Calu3 (cell line): ENCODE measurements at regions of chr2 and their contacts with region 1.

Region 1: DNA sequence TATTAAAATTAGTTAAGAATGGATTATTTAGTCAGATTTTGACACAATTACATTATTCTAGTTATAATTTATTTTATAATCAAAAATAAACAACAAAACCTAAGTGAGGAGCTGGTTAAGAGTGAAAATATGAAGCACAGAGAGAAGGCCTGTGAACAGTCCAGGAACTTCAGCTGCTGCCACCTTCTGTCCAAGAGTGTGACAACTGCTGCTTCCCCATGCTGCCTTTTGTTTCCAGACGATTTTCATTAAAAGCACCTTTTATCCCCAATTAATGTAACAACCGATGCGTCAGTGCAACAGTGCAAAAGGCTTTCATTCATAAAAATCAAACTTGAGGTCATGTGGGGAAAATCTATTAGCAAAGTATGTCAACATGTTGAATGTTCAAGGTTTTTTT is 363.6 kb downstream of the CTNNA2 start:
- DNase-seq: no peak
- H3K4me3 Mint-ChIP-seq: no peak overlapping the region
- H3K27ac Mint-ChIP-seq: no peak overlapping the region
- H3K4me1 Mint-ChIP-seq: no peaks in the 10 kb centered on the region
- H3K27me3 Mint-ChIP-seq: no peaks in the 10 kb centered on the region
- CTCF ChIP-seq: no peak

Region 2: DNA sequence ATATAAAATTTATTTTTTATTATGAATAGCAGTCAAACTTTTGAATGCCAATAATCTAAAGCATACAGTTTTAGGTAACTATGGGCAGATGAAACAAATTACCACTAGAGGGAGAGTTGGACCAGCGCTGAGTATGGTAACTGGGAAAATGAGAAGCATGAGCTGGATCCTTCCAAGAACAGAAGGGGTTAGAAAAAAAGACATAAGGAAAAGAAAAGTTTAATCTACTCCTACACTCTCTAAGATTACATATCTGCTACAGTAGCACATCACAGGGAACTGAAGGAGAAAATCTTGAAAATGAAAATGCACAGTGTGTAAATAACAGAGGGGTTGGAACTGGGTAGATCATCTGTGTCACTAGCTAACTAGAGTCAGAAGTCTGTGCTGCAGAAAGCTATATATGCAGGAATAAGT is 835.4 kb before region 1 on chr2:
- CTCF ChIA-PET with region 1: no interaction called
- intact Hi-C with region 1: loop called (anchors 10 kb)
- DNase-seq: no peak
- H3K4me3 Mint-ChIP-seq: no peak overlapping the region
- H3K27ac Mint-ChIP-seq: no peak overlapping the region
- H3K4me1 Mint-ChIP-seq: no peaks in the 10 kb centered on the region
- H3K27me3 Mint-ChIP-seq: no peaks in the 10 kb centered on the region
- CTCF ChIP-seq: no peak

Region 3: DNA sequence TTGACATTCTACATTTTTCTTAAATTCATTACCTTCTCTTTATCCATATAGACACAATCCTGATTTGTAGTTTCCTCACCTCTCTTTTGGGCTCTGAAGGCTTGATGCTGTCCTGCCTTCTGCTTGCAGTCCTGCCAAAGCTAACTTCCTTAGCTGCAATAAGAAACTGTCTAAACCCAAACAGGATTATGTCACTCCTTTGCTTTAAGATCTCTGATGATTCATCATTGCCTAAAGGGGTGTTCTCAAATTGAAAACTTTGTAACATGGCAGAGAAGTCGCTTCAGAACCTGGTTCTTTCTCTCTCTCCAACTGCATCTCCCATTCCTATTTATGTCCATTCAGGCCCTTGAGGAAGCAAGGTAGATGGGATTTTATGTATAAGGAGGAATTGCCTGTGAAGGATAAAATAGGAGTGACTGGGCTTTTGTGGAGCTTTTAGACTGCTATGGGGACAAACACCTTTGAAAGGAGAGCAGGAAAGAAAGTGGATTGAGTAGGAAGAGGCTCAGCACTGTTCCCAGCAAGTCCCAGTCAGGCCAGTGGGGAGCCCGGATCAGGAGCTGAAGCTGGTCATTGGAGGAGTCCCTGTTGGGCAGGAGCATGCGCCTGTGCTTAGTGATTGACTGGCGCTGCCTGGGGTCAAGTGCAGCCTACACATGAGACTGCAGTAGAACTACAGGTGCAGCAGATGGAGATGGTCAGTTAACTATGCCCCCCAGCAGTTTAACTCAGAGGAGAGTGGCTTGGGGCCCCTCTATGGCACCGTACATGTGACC is 27.0 kb after region 1 on chr2:
- CTCF ChIA-PET with region 1: no interaction called
- intact Hi-C with region 1: no loop called
- DNase-seq: no peak
- H3K4me3 Mint-ChIP-seq: no peak overlapping the region
- H3K27ac Mint-ChIP-seq: no peak overlapping the region
- H3K4me1 Mint-ChIP-seq: no peaks in the 10 kb centered on the region
- H3K27me3 Mint-ChIP-seq: no peaks in the 10 kb centered on the region
- CTCF ChIP-seq: no peak